Sciatic nerve (tissue), 2 donors: ENCODE measurements at regions of chr21 and their contacts with region 1.

Region 1: DNA sequence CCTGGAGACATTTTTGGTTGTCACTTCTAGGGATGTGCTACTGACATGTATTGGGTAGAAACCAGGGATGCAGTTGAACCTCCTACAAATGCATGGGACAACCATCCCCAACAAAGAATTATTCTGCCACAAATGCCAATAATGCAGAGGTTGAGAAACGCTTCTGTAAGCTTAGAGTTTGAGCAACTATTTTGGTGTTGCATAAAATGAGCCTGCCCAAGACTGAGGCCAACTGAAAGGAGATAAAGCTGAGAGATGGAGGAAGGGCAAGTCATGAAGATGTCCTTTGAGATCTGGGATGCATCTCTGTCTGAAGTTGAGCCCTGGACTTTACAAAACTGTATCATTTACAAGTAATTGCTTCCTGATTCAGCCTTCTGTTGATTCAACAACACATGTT is 106.9 kb downstream of the KCNJ15 start:
- DNase-seq: no peak
- ATAC-seq: no peak

Region 2: GRCh38 chr21:39822042-39822441 is 1458.3 kb after region 1 on chr21:
- intact Hi-C with region 1: loop called (anchors 5 kb)
- DNase-seq: no peak
- ATAC-seq: no peak